PC-3 (cell line): ENCODE measurements at regions of chr12 and their contacts with region 1.

Region 1: DNA sequence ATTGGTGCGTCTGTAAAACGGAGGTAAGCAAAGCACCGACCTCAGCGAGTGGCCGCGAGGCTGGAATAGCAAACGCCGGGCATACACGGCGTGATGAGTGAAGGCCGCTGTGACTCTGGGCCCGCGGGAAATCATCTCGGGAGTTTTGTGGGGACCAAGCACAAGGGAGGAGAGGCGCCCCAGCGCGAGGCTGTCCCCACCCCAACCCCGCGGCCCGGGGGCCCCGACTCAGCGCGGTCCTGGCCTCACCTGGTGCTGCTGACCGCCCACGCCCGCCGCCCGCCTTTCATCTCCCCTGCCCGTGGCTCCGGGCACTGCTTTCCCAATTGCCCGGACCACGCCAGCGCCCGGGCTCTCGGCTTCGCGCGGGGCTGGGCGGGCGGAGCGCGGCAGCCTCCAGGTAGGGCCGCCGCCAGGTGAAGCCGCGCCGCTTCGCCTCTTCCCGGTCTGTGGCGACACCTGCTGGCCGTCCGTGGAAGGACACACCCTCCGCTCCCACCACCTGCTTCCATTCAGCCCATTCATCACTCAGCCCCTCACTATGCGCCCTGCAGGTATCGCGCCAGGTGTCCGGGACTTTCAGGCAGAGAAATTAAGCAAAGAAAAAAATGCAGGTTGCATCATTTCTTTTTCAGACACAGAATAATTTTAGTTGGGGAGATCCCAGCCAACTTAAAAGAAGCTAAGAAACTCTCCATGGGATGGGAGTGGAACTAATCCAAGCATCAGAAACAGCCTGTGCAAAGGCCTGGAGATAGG is 360.4 kb downstream of the MED13L start:
- DNase-seq: peak; percentile 83
- ATAC-seq: peak; percentile 94
- H3K4me3 ChIP-seq: peak overlapping the region; percentile 64
- H3K27ac ChIP-seq: no peak overlapping the region
- H3K4me1 ChIP-seq: no peaks in the 10 kb centered on the region
- H3K27me3 ChIP-seq: peaks cover 6% of the 10 kb centered on the region; the same call in 1 of the 2 replicates
- CTCF ChIP-seq: peak; percentile 93

Region 2: DNA sequence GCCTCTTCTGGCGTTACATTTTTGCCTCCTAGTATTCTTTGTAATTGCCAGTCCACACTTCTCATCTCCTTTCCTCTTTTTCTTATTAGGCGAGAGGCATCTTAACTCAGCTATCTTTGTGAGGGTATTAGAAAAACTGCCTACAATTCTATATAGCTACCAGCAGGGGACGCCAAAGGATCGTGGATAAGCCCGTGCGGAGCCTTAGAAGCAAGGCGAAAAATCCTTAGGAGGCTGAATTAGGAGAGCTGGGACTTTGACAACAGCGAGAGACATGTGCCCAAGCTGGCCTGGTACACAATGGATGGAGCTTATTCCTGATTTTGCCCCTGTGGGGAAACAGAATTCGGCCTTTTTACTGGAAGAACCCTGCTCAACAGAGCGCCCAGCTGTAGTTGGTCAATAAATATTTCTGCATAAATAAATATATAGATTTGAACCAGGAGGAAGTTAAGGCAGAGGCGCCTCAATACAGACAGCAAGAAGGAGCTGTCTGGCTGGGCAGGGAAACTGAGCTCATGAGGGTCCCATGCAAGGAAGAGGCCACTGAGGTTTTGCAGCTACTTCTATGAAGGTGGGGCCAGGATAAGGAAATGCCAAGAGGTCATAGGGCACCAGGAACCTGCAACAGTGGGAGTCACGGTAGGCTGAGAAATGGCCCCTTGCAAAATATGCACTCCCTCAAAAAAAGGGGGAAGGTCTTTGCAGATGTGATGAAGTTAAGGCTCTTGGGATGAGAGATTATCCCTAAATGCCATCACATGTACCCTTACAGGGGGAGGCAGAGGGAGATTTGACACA is 1936.4 kb before region 1 on chr12:
- CTCF ChIA-PET with region 1: no interaction called
- POLR2A ChIA-PET with region 1: no interaction called
- intact Hi-C with region 1: loop called (anchors 10 kb)
- DNase-seq: peak; percentile 80
- ATAC-seq: peak; percentile 86
- H3K4me3 ChIP-seq: no peak overlapping the region
- H3K27ac ChIP-seq: no peak overlapping the region
- H3K4me1 ChIP-seq: no peaks in the 10 kb centered on the region
- H3K27me3 ChIP-seq: peaks cover 59% of the 10 kb centered on the region
- CTCF ChIP-seq: peak; percentile 99

Region 3: DNA sequence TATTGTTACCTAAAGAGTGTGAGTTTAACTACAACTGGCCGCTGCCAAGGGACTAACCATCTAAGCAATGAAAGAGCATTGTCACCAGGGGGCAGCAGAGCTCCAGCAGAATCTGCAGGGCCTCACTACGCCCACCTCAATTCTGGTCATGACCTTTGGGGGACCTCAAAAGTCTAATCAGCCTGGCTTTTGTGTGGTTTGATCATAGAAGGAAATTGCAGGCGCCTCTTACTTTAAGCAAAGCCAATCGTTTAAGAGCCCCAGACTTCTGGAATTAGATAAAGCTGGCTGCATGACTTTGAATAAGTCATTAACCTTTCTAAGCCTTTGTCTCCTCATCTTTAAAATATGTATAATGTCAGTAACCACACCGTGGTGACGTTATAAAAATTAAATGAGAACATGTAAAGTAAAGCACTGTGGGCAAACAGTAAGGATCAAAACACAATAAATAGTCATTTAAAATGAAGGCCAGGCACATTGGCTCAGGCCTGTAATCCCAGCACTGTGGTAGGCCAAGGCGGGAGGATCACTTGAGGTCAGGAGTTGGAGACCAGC is 1291.7 kb before region 1 on chr12:
- CTCF ChIA-PET with region 1: interaction called, 3 read pairs
- POLR2A ChIA-PET with region 1: no interaction called
- intact Hi-C with region 1: loop called (anchors 1 kb)
- DNase-seq: peak; percentile 74
- ATAC-seq: peak; percentile 96
- H3K4me3 ChIP-seq: no peak overlapping the region
- H3K27ac ChIP-seq: no peak overlapping the region
- H3K4me1 ChIP-seq: no peaks in the 10 kb centered on the region
- H3K27me3 ChIP-seq: peaks cover 19% of the 10 kb centered on the region; the same call in 1 of the 2 replicates
- CTCF ChIP-seq: peak; percentile 98

Region 4: DNA sequence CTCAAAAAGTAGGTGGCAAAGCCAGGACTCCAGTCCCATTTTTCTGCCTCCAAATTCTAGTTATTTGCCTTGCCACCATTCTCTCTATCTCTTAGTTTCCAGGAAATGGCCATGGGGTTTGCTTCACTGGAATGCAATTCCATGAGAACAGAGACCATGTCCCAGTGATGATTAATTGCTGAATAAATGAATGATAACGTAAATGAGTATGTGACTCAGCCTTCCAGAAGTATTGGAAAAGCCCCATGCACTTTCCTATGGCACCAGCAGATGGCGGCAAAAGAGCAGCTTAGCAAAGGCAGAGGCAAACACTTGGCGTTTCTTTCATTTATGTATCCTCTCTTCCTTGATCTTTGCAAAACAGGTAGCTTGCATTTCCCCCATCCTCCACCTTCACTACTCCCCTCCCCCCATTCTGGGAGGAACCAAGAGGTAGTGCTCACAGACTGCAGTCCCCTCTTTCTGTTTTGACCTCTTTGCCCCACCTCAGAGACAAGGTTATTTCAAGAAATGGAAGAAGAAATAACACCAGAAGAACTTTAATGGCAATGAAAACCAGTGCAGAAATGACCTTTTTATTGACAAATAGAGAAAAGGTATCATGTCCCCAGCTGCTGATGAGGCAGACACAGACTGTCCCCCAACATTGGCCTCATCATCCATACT is 1254.4 kb before region 1 on chr12:
- CTCF ChIA-PET with region 1: no interaction called
- POLR2A ChIA-PET with region 1: no interaction called
- intact Hi-C with region 1: loop called (anchors 1 kb)
- DNase-seq: peak; percentile 98
- ATAC-seq: peak; percentile 44
- H3K4me3 ChIP-seq: no peak overlapping the region
- H3K27ac ChIP-seq: peak overlapping the region; percentile 75
- H3K4me1 ChIP-seq: peaks cover 47% of the 10 kb centered on the region
- H3K27me3 ChIP-seq: no peaks in the 10 kb centered on the region
- CTCF ChIP-seq: peak; percentile 96

Region 5: DNA sequence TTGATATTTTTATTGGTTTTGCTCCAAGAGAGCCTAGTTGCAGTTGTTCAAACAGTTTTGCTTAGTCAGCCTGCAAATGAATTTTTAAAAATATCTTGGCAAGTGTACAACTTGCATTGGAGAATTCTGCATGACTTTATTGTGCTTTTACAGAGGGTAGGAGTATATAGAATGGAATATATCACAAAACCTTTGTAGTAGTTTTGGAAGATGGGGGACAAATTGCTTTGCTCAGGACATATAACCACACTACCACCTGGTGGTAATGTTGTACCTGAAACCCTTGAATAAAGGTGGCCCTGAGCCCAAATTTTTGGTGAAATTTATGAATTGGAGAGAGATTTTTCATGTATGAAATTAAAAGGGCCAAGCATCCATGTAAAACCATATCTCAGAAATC is 284.8 kb before region 1 on chr12:
- CTCF ChIA-PET with region 1: no interaction called
- POLR2A ChIA-PET with region 1: no interaction called
- intact Hi-C with region 1: loop called (anchors 10 kb)
- DNase-seq: peak; percentile 67
- ATAC-seq: peak; percentile 55; the same call in 1 of the 2 replicates
- H3K4me3 ChIP-seq: no peak overlapping the region
- H3K27ac ChIP-seq: no peak overlapping the region
- H3K4me1 ChIP-seq: no peaks in the 10 kb centered on the region
- H3K27me3 ChIP-seq: no peaks in the 10 kb centered on the region
- CTCF ChIP-seq: peak; percentile 78

Region 6: GRCh38 chr12:115763376-115763775 is 153.7 kb before region 1 on chr12:
- CTCF ChIA-PET with region 1: interaction called, 10 read pairs
- POLR2A ChIA-PET with region 1: no interaction called
- intact Hi-C with region 1: no loop called
- DNase-seq: peak; percentile 49
- ATAC-seq: peak; percentile 79
- H3K4me3 ChIP-seq: no peak overlapping the region
- H3K27ac ChIP-seq: no peak overlapping the region
- H3K4me1 ChIP-seq: no peaks in the 10 kb centered on the region
- H3K27me3 ChIP-seq: peaks cover 34% of the 10 kb centered on the region
- CTCF ChIP-seq: no peak

Region 7: GRCh38 chr12:115866909-115867525 is 50.1 kb before region 1 on chr12:
- CTCF ChIA-PET with region 1: interaction called, 11 read pairs
- POLR2A ChIA-PET with region 1: no interaction called
- intact Hi-C with region 1: loop called (anchors 1 kb)
- DNase-seq: peak; percentile 66
- ATAC-seq: peak; percentile 75
- H3K4me3 ChIP-seq: no peak overlapping the region
- H3K27ac ChIP-seq: no peak overlapping the region
- H3K4me1 ChIP-seq: peaks cover 16% of the 10 kb centered on the region
- H3K27me3 ChIP-seq: peaks cover 33% of the 10 kb centered on the region
- CTCF ChIP-seq: peak; percentile 70

Region 8: GRCh38 chr12:115988625-115989563 is 71.8 kb after region 1 on chr12:
- CTCF ChIA-PET with region 1: no interaction called
- POLR2A ChIA-PET with region 1: no interaction called
- intact Hi-C with region 1: no loop called
- DNase-seq: peak; percentile 48
- ATAC-seq: peak; percentile 88
- H3K4me3 ChIP-seq: no peak overlapping the region
- H3K27ac ChIP-seq: peak overlapping the region; percentile 6; the same call in 1 of the 2 replicates
- H3K4me1 ChIP-seq: peaks cover 17% of the 10 kb centered on the region
- H3K27me3 ChIP-seq: no peaks in the 10 kb centered on the region
- CTCF ChIP-seq: no peak